A549 (cell line): ENCODE measurements at regions of chr10 and their contacts with region 1.

Region 1: DNA sequence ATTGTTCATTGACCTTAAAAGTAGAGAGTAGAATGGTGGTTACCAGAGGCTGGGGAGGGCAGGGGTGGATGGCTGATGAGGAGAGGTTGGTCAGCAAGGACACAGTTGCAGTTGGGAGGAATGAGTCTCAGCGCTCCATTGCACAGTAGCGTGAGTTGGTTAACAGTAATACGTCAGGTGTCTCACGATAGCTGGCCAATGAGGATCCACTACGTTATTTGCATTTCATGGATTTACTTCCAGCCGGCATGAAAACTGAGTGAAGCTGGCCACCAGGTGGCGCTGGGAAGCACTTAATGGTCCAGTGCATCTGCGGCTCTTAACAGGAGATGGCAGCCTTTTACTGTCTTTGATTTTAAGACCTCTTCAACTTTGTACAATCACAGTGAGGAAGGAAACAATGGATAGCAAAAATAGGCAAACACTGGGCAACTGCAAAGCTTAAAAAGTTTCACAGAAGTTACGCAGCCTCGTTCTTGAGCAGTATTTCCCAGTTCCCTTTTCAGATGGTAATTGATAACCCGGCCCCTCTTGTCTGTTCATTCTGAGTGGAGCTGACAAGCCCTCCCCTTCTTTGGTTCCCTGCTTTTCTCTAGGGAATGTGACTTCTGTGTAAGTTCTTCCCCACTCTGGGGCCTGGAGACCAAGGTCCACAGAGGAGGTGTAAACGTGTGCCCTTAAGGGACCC is 23.7 kb downstream of the AKR1E2 start:
- DNase-seq: peak; percentile 80 to 98
- ATAC-seq: peak; percentile 85
- H3K4me3 ChIP-seq: no peak overlapping the region
- H3K27ac ChIP-seq: peak overlapping the region; percentile 91 to 95
- H3K4me1 ChIP-seq: peaks cover 65% of the 10 kb centered on the region
- CTCF ChIP-seq: peak; percentile 100
- EP300 ChIP-seq: no peak
- POLR2A ChIP-seq: no peak
- RAD21 ChIP-seq: peak; percentile 99 to 100

Region 2: DNA sequence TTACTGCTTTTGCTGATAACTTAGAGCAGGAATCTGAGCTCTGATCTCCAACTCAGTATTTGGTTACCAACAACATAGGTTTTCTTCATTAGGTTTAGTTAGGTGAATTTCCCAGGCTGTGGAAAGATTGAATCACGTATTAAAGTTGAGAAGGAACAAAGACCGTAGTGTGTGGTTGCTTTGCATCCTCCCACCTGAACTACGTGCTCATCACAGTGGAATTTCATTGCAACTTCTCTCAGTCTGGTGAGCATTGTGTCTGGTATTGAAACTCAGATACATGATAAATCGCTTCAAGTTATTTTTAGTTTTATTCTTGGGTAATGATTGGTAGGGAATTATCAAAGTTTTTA is 163.1 kb before region 1 on chr10:
- CTCF ChIA-PET with region 1: no interaction called
- POLR2A ChIA-PET with region 1: no interaction called
- DNase-seq: peak; percentile 51 to 77
- ATAC-seq: peak; percentile 86
- H3K4me3 ChIP-seq: no peak overlapping the region
- H3K27ac ChIP-seq: peak overlapping the region; percentile 19 to 71; a peak in 5 of 6 replicates
- H3K4me1 ChIP-seq: peaks cover 41% of the 10 kb centered on the region
- CTCF ChIP-seq: no peak
- EP300 ChIP-seq: peak; percentile 16 to 36; a peak in 2 of 5 replicates
- POLR2A ChIP-seq: no peak
- RAD21 ChIP-seq: 0 out of 5 replicates have a peak, but pooled peaks of 1 of the 2 experiments have one; percentile 9

Region 3: DNA sequence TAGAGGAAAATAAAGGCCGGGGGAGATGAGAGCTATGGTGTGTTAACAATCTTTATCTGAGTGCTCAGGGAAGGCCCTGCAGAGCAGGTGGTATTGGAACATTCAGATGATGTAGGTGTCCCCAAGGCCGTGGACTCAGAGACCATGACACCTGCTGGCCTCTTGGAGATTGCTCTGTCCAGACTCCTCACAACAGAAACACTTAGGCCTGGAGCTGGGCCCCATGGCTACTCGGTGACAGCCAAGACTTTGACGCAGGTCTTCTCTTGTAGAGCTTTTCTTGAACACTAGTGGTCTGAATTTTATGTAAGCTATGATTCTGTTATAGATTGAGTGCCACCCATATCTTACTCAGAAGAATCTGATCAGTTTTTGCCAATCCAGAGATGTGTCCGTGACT is 10.3 kb before region 1 on chr10:
- CTCF ChIA-PET with region 1: interaction called, 153 read pairs
- POLR2A ChIA-PET with region 1: no interaction called
- DNase-seq: peak in 1 of 2 experiments; percentile 30
- ATAC-seq: peak; percentile 71 to 72; a peak in 4 of 6 replicates
- H3K4me3 ChIP-seq: no peak overlapping the region
- H3K27ac ChIP-seq: no peak overlapping the region
- H3K4me1 ChIP-seq: no peaks in the 10 kb centered on the region
- CTCF ChIP-seq: no peak
- EP300 ChIP-seq: no peak
- POLR2A ChIP-seq: no peak
- RAD21 ChIP-seq: no peak

Region 4: DNA sequence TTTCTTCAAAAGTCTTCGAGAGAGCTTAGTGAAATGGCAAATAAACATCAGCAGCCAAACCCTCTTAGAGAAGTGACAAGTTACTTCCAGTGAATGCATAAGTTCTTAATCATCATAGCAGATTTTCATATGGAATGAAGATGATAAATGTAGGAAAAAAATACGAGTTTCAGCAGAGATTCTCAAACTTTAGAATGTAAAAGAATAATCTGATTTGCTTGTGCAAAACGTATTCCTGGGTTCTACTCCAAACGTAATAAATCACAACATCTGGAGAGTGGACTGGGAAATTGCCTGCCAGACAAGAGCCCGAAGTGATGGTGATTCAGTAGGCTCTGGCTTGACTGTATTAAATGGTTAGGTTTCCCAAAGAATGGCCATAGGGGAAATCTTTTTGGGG is 38.5 kb after region 1 on chr10:
- CTCF ChIA-PET with region 1: interaction called, 17 read pairs
- POLR2A ChIA-PET with region 1: no interaction called
- DNase-seq: no peak
- ATAC-seq: no peak
- H3K4me3 ChIP-seq: no peak overlapping the region
- H3K27ac ChIP-seq: no peak overlapping the region
- H3K4me1 ChIP-seq: peaks cover 3% of the 10 kb centered on the region; the same call in 1 of the 3 replicates
- CTCF ChIP-seq: no peak
- EP300 ChIP-seq: no peak
- POLR2A ChIP-seq: no peak
- RAD21 ChIP-seq: no peak

Region 5: GRCh38 chr10:5094265-5095205 is 244.8 kb after region 1 on chr10 and contains the start of gene AKR1C3:
- CTCF ChIA-PET with region 1: interaction called, 81 read pairs
- POLR2A ChIA-PET with region 1: interaction called, 3 read pairs
- DNase-seq: peak; percentile 61 to 94
- ATAC-seq: peak; percentile 78 to 86
- H3K4me3 ChIP-seq: peak within 1 kb of the TSS; percentile 87
- H3K27ac ChIP-seq: peak within 1 kb of the TSS; percentile 89 to 98
- H3K4me1 ChIP-seq: peaks cover 36% of the 10 kb centered on the region
- CTCF ChIP-seq: peak; percentile 66
- EP300 ChIP-seq: no peak
- POLR2A ChIP-seq: peak; percentile 53
- RAD21 ChIP-seq: peak; percentile 71
- polyA plus RNA-seq, gene AKR1C3: 3,820 and 4,867 TPM in 2 replicates

Region 6: GRCh38 chr10:5293691-5294550 is 444.2 kb after region 1 on chr10:
- CTCF ChIA-PET with region 1: interaction called, 15 read pairs
- POLR2A ChIA-PET with region 1: interaction called, 3 read pairs
- DNase-seq: peak; percentile 77 to 91
- ATAC-seq: peak; percentile 69 to 86
- H3K4me3 ChIP-seq: no peak overlapping the region
- H3K27ac ChIP-seq: peak overlapping the region; percentile 96 to 97
- H3K4me1 ChIP-seq: peaks cover 41% of the 10 kb centered on the region
- CTCF ChIP-seq: peak; percentile 72
- EP300 ChIP-seq: no peak
- POLR2A ChIP-seq: no peak
- RAD21 ChIP-seq: peak; percentile 62 to 72

Region 7: GRCh38 chr10:5396556-5397300 is 547.0 kb after region 1 on chr10:
- CTCF ChIA-PET with region 1: interaction called, 17 read pairs
- POLR2A ChIA-PET with region 1: no interaction called
- DNase-seq: no peak
- ATAC-seq: no peak
- H3K4me3 ChIP-seq: no peak overlapping the region
- H3K27ac ChIP-seq: no peak overlapping the region
- H3K4me1 ChIP-seq: no peaks in the 10 kb centered on the region
- CTCF ChIP-seq: no peak
- EP300 ChIP-seq: no peak
- POLR2A ChIP-seq: no peak
- RAD21 ChIP-seq: no peak